T-cell (primary cell): ENCODE measurements at regions of chr20 and their contacts with region 1.

Region 1: GRCh38 chr20:46674253-46675083 is 14.8 kb downstream of the TP53RK start:
- DNase-seq: no peak
- ATAC-seq: no peak
- H3K4me3 ChIP-seq: no peak overlapping the region
- H3K4me3 Mint-ChIP-seq: no peak overlapping the region
- H3K27ac ChIP-seq: no peak overlapping the region
- H3K27ac Mint-ChIP-seq: no peak overlapping the region
- H3K4me1 ChIP-seq: no peaks in the 10 kb centered on the region
- H3K4me1 Mint-ChIP-seq: no peaks in the 10 kb centered on the region
- H3K27me3 ChIP-seq: no peaks in the 10 kb centered on the region
- H3K27me3 Mint-ChIP-seq: no peaks in the 10 kb centered on the region

Region 2: DNA sequence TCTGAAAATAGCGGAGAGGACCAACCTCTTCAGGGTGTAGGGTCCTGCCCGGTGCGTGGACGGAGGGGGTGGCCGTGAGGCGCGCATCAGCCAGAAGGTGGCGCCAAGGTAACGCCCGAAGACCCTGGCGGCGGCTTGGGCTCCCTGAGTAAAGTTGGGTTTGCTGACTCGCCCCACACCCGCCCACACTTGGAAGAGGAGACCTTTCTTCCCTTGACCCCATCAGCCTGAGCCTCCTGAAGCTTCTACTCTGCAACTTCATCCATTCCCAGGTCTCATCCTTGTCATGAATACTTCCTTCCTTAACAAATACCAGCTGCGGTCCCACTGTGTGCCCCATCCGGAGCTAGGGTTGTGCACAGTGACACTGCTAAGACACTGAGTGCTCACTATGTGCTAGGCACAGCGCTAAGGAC is 541.8 kb before region 1 on chr20:
- CTCF ChIA-PET with region 1: no interaction called
- POLR2A ChIA-PET with region 1: interaction called in 1 of 2 experiments, 10 read pairs
- DNase-seq: peak; percentile 8 to 68 (median 42)
- ATAC-seq: peak; percentile 72 to 85 (median 79)
- H3K4me3 ChIP-seq: no peak overlapping the region
- H3K4me3 Mint-ChIP-seq: no peak overlapping the region
- H3K27ac ChIP-seq: no peak overlapping the region
- H3K27ac Mint-ChIP-seq: no peak overlapping the region
- H3K4me1 ChIP-seq: peaks cover 0 to 6% of the 10 kb centered on the region in 2 experiments
- H3K4me1 Mint-ChIP-seq: peaks cover 0 to 3% (median 3%) of the 10 kb centered on the region in 3 donors
- H3K27me3 ChIP-seq: peaks cover 2 to 65% of the 10 kb centered on the region in 2 experiments
- H3K27me3 Mint-ChIP-seq: peaks cover 36 to 51% of the 10 kb centered on the region in 2 donors

Region 3: GRCh38 chr20:46621492-46621891 is 53.0 kb before region 1 on chr20:
- CTCF ChIA-PET with region 1: no interaction called
- POLR2A ChIA-PET with region 1: no interaction called
- DNase-seq: no peak
- ATAC-seq: no peak
- H3K4me3 ChIP-seq: no peak overlapping the region
- H3K4me3 Mint-ChIP-seq: no peak overlapping the region
- H3K27ac ChIP-seq: no peak overlapping the region
- H3K27ac Mint-ChIP-seq: no peak overlapping the region
- H3K4me1 ChIP-seq: no peaks in the 10 kb centered on the region
- H3K4me1 Mint-ChIP-seq: no peaks in the 10 kb centered on the region
- H3K27me3 ChIP-seq: peaks cover 0 to 7% of the 10 kb centered on the region in 2 experiments
- H3K27me3 Mint-ChIP-seq: peaks cover 5 to 23% of the 10 kb centered on the region in 2 donors

Region 4: DNA sequence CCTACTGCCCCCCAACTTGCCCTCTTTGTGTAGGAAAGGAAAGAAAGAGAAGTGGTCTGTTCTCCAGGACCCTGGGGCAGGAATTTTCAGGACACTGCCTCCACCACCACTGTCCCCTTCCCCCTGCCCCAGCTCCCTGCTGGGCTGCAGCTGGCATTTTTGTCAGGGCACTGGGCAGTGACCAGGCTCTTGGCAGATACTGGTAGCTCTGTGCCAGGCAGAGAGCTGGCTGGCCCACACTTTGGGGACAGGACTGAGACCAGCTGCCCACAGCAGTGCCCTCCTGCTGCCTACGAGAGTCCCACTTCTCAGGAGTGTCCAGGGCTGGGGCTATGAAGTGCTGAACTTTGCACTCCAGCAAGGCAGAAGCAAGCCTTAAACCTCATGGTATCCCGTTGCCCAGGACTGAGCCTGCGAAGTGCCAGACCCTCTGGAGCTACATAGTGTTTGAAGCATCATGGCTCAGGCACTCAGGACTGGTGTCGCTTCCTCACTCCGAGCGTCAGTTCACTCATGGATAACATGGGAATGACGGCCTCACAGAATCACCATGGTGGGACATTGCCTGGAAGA is 42.5 kb before region 1 on chr20:
- CTCF ChIA-PET with region 1: no interaction called
- POLR2A ChIA-PET with region 1: no interaction called
- DNase-seq: no peak
- ATAC-seq: no peak
- H3K4me3 ChIP-seq: no peak overlapping the region
- H3K4me3 Mint-ChIP-seq: no peak overlapping the region
- H3K27ac ChIP-seq: no peak overlapping the region
- H3K27ac Mint-ChIP-seq: no peak overlapping the region
- H3K4me1 ChIP-seq: no peaks in the 10 kb centered on the region
- H3K4me1 Mint-ChIP-seq: no peaks in the 10 kb centered on the region
- H3K27me3 ChIP-seq: peaks cover 0 to 30% of the 10 kb centered on the region in 2 experiments
- H3K27me3 Mint-ChIP-seq: peaks cover 11 to 29% of the 10 kb centered on the region in 2 donors